CD4-positive, alpha-beta memory T cell (primary cell): ENCODE measurements at regions of chr6 and their contacts with region 1.

Region 1: DNA sequence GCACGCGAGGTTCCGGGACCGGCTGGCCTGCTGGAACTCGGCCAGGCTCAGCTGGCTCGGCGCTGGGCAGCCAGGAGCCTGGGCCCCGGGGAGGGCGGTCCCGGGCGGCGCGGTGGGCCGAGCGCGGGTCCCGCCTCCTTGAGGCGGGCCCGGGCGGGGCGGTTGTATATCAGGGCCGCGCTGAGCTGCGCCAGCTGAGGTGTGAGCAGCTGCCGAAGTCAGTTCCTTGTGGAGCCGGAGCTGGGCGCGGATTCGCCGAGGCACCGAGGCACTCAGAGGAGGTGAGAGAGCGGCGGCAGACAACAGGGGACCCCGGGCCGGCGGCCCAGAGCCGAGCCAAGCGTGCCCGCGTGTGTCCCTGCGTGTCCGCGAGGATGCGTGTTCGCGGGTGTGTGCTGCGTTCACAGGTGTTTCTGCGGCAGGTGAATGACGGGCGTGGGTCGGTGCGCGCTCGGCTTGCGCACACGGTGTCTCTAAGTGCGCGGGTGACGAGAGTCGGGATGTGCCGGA is at the start of gene CDKN1A:
- DNase-seq: peak; percentile 62 to 84 (median 72)
- H3K4me3 ChIP-seq: peak within 1 kb of the TSS; percentile 77 to 90
- H3K4me3 Mint-ChIP-seq: peak within 1 kb of the TSS; percentile 89 to 98 (median 94)
- H3K27ac ChIP-seq: peak within 1 kb of the TSS; percentile 80
- H3K27ac Mint-ChIP-seq: peak within 1 kb of the TSS; percentile 90 to 100 (median 95)
- H3K4me1 ChIP-seq: peaks cover 50% of the 10 kb centered on the region
- H3K4me1 Mint-ChIP-seq: peaks cover 26 to 63% (median 47%) of the 10 kb centered on the region in 4 donors
- H3K27me3 ChIP-seq: no peaks in the 10 kb centered on the region
- H3K27me3 Mint-ChIP-seq: peaks cover 0 to 6% of the 10 kb centered on the region in 2 donors
- total RNA-seq, gene CDKN1A: 10.5 to 12.9 TPM

Region 2: GRCh38 chr6:36302227-36302976 is 376.2 kb before region 1 on chr6:
- CTCF ChIA-PET with region 1: no interaction called
- POLR2A ChIA-PET with region 1: no interaction called
- intact Hi-C with region 1: loop called (anchors 1 kb)
- DNase-seq: peak; percentile 86 to 91 (median 87)
- H3K4me3 ChIP-seq: no peak overlapping the region
- H3K4me3 Mint-ChIP-seq: no peak overlapping the region
- H3K27ac ChIP-seq: no peak overlapping the region
- H3K27ac Mint-ChIP-seq: peak overlapping the region in 2 of 7 donors; percentile 30 to 32
- H3K4me1 ChIP-seq: no peaks in the 10 kb centered on the region
- H3K4me1 Mint-ChIP-seq: peaks cover 0 to 9% (median 2%) of the 10 kb centered on the region in 4 donors
- H3K27me3 ChIP-seq: no peaks in the 10 kb centered on the region
- H3K27me3 Mint-ChIP-seq: peaks cover 10 to 22% of the 10 kb centered on the region in 2 donors

Region 3: GRCh38 chr6:36423101-36423824 is 255.3 kb before region 1 on chr6:
- CTCF ChIA-PET with region 1: interaction called, 12 read pairs
- POLR2A ChIA-PET with region 1: interaction called, 12 read pairs
- intact Hi-C with region 1: loop called (anchors 1 kb)
- DNase-seq: peak; percentile 97 to 99 (median 97)
- H3K4me3 ChIP-seq: peak overlapping the region; percentile 69 to 85
- H3K4me3 Mint-ChIP-seq: peak overlapping the region; percentile 91 to 95 (median 93)
- H3K27ac ChIP-seq: peak overlapping the region; percentile 68
- H3K27ac Mint-ChIP-seq: peak overlapping the region; percentile 73 to 97 (median 95)
- H3K4me1 ChIP-seq: peaks cover 15% of the 10 kb centered on the region
- H3K4me1 Mint-ChIP-seq: peaks cover 10 to 19% (median 14%) of the 10 kb centered on the region in 4 donors
- H3K27me3 ChIP-seq: no peaks in the 10 kb centered on the region
- H3K27me3 Mint-ChIP-seq: no peaks in the 10 kb centered on the region

Region 4: GRCh38 chr6:36546920-36547645 is 131.5 kb before region 1 on chr6 and contains the start of gene STK38:
- CTCF ChIA-PET with region 1: no interaction called
- POLR2A ChIA-PET with region 1: no interaction called
- intact Hi-C with region 1: loop called (anchors 2 kb)
- DNase-seq: peak; percentile 85 to 90 (median 87)
- H3K4me3 ChIP-seq: peak within 1 kb of the TSS; percentile 89 to 99
- H3K4me3 Mint-ChIP-seq: peak within 1 kb of the TSS; percentile 94 to 100 (median 100)
- H3K27ac ChIP-seq: peak within 1 kb of the TSS; percentile 92
- H3K27ac Mint-ChIP-seq: peak within 1 kb of the TSS; percentile 94 to 99 (median 98)
- H3K4me1 ChIP-seq: peaks cover 48% of the 10 kb centered on the region
- H3K4me1 Mint-ChIP-seq: peaks cover 23 to 65% (median 39%) of the 10 kb centered on the region in 4 donors
- H3K27me3 ChIP-seq: no peaks in the 10 kb centered on the region
- H3K27me3 Mint-ChIP-seq: no peaks in the 10 kb centered on the region
- total RNA-seq, gene STK38: 186 to 190 TPM

Region 5: GRCh38 chr6:36599791-36600209 is 78.8 kb before region 1 on chr6:
- CTCF ChIA-PET with region 1: interaction called, 11 read pairs
- POLR2A ChIA-PET with region 1: interaction called, 13 read pairs
- intact Hi-C with region 1: loop called (anchors 1 kb)
- DNase-seq: peak; percentile 59 to 82 (median 66)
- H3K4me3 ChIP-seq: peak overlapping the region in 1 of 2 donors; percentile 89
- H3K4me3 Mint-ChIP-seq: peak overlapping the region; percentile 83 to 99 (median 90)
- H3K27ac ChIP-seq: peak overlapping the region; percentile 94
- H3K27ac Mint-ChIP-seq: peak overlapping the region; percentile 48 to 97 (median 92)
- H3K4me1 ChIP-seq: peaks cover 82% of the 10 kb centered on the region
- H3K4me1 Mint-ChIP-seq: peaks cover 51 to 87% (median 67%) of the 10 kb centered on the region in 4 donors
- H3K27me3 ChIP-seq: no peaks in the 10 kb centered on the region
- H3K27me3 Mint-ChIP-seq: no peaks in the 10 kb centered on the region

Region 6: GRCh38 chr6:36623547-36624459 is 54.8 kb before region 1 on chr6:
- CTCF ChIA-PET with region 1: interaction called, 23 read pairs
- POLR2A ChIA-PET with region 1: interaction called, 10 read pairs
- intact Hi-C with region 1: loop called (anchors 1 kb)
- DNase-seq: peak; percentile 65 to 78 (median 73)
- H3K4me3 ChIP-seq: no peak overlapping the region
- H3K4me3 Mint-ChIP-seq: no peak overlapping the region
- H3K27ac ChIP-seq: no peak overlapping the region
- H3K27ac Mint-ChIP-seq: peak overlapping the region; percentile 32 to 82 (median 69)
- H3K4me1 ChIP-seq: peaks cover 9% of the 10 kb centered on the region
- H3K4me1 Mint-ChIP-seq: peaks cover 5 to 16% (median 9%) of the 10 kb centered on the region in 4 donors
- H3K27me3 ChIP-seq: no peaks in the 10 kb centered on the region
- H3K27me3 Mint-ChIP-seq: no peaks in the 10 kb centered on the region

Region 7: GRCh38 chr6:36688534-36689075 is 10.0 kb after region 1 on chr6:
- CTCF ChIA-PET with region 1: interaction called, 18 read pairs
- POLR2A ChIA-PET with region 1: interaction called, 15 read pairs
- intact Hi-C with region 1: no loop called
- DNase-seq: no peak
- H3K4me3 ChIP-seq: no peak overlapping the region
- H3K4me3 Mint-ChIP-seq: peak overlapping the region in 1 of 8 donors; percentile 14
- H3K27ac ChIP-seq: no peak overlapping the region
- H3K27ac Mint-ChIP-seq: peak overlapping the region in 3 of 7 donors; percentile 12 to 47 (median 47)
- H3K4me1 ChIP-seq: peaks cover 23% of the 10 kb centered on the region
- H3K4me1 Mint-ChIP-seq: peaks cover 18 to 45% (median 29%) of the 10 kb centered on the region in 4 donors
- H3K27me3 ChIP-seq: no peaks in the 10 kb centered on the region
- H3K27me3 Mint-ChIP-seq: no peaks in the 10 kb centered on the region

Region 8: DNA sequence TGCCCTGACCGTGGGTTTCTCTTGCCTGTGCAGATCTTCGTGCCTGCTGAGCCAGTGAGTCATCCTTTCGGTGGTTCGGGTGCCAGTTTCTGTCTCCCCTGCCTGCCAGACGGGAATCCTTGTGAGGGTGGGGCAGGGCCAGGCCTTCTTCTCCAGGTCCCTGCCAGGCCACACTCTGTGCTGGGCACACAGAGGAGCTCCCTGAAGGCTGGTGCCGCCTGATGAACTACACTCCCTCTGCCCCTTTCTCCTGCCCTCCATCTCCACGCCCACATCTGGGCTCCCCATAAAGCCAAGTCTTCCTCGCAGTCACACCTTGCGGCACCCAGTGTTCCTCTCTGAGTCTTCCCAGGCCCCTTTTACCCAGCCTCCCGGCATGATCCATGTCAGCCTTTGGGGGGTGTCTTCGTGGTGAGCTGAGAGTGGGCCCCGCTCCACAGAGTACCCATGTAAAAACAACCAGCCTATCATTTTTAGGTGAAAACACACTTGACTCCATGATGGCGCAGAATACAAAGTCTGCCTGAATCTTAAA is 346.2 kb after region 1 on chr6:
- CTCF ChIA-PET with region 1: no interaction called
- POLR2A ChIA-PET with region 1: no interaction called
- intact Hi-C with region 1: no loop called
- DNase-seq: no peak
- H3K4me3 ChIP-seq: no peak overlapping the region
- H3K4me3 Mint-ChIP-seq: no peak overlapping the region
- H3K27ac ChIP-seq: no peak overlapping the region
- H3K27ac Mint-ChIP-seq: peak overlapping the region in 6 of 7 donors; percentile 39 to 77 (median 56)
- H3K4me1 ChIP-seq: peaks cover 46% of the 10 kb centered on the region
- H3K4me1 Mint-ChIP-seq: peaks cover 34 to 56% (median 43%) of the 10 kb centered on the region in 4 donors
- H3K27me3 ChIP-seq: no peaks in the 10 kb centered on the region
- H3K27me3 Mint-ChIP-seq: no peaks in the 10 kb centered on the region

Region 9: DNA sequence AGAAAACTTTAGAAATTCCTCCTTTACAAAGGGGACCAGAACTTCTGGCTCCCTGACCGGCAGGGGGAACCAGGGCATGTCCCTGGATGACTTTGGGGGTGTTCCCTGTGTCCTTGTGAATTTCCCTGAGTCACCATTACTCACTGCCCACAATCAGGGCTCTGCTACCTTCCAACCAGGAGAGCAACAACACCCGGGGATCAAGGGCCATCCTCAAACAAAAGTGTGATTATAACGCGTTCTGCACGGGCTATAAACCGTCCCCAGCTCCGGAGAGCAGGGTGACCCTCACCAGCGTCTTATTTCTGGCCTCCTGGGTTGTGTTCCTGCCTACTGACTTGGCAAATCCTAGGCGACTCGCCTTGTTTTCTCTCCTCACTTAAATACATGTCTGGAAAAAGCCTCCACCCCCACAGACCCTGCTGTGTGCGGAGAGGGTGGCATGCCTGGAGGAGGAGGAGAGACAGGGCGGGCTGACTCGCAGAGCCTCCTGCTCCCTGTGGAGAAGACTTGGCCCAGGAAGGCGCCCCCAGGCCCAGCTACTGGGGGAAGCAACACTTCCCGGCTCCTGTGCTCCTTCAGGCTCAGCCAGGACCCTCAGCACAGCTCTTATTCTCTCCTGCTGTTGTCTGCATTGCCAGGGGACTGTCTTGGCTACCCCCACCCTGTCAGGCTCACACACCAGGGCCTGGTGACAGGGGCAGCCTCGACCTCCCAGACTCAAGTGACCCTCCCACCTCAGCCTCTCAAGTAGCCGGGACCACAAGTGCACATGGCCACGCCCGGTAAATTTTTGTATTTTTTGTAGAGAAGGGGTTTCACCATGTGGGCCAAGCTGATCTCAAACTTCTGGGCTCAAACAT is 381.0 kb after region 1 on chr6:
- CTCF ChIA-PET with region 1: no interaction called
- POLR2A ChIA-PET with region 1: no interaction called
- intact Hi-C with region 1: no loop called
- DNase-seq: no peak
- H3K4me3 ChIP-seq: no peak overlapping the region
- H3K4me3 Mint-ChIP-seq: no peak overlapping the region
- H3K27ac ChIP-seq: no peak overlapping the region
- H3K27ac Mint-ChIP-seq: peak overlapping the region in 1 of 7 donors; percentile 52
- H3K4me1 ChIP-seq: no peaks in the 10 kb centered on the region
- H3K4me1 Mint-ChIP-seq: peaks cover 0 to 5% (median 2%) of the 10 kb centered on the region in 4 donors
- H3K27me3 ChIP-seq: no peaks in the 10 kb centered on the region
- H3K27me3 Mint-ChIP-seq: no peaks in the 10 kb centered on the region